Sigmoid colon (tissue), 7 donors: ENCODE measurements at regions of chr9 and their contacts with region 1.

Region 1: DNA sequence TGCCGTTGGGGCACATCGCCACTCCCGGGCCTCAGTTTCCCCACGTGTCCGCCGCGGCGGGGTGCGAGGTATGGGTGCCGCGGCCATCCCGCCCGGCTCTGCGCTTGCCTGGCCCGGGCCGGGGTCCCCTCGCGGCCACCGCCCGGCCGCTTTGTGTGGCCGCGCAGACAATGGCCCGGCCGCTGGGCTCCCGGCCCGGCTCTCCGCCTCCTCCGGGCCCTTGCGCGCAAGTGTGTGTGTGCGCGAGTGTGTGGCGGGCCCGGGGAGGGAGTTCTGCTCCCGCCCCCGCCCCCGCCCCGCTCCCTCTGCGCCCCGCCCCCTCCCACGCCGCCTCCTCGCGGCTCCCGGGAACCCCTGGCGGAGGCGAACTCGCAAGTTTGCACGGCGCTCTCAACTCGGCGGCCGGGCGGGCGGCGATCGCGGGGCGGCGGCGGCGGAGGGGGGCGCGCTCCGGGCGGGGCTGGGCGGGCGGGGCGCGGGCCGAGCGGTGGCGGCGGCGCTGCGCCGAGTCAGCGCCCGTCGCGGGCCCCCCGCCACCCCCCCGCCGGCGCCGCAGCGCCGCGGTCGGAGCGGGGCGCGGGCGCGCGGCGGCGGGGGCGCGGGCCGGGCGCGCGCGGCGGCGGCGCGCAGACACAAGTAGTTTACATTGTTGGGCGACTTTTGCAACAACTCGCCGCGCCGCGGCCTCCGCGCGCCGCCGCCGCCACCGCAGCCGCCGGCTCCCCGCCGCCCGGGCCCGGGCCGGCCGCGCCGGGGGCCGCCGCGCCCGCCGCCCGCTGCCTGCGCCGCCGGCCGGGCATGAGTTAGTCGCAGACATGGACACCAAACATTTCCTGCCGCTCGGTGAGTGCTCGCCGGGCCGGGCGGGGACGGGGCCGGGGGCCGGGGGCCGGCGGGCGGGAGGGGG is at the start of gene RXRA:
- DNase-seq: peak; percentile 94
- H3K4me3 ChIP-seq: peak within 1 kb of the TSS; percentile 81 to 88 (median 84)
- H3K27ac ChIP-seq: peak within 1 kb of the TSS; percentile 96 to 100 (median 97)
- H3K4me1 ChIP-seq: peaks cover 0 to 63% (median 60%) of the 10 kb centered on the region in 4 donors
- H3K27me3 ChIP-seq: no peaks in the 10 kb centered on the region
- CTCF ChIP-seq: no peak
- EP300 ChIP-seq: no peak
- POLR2A ChIP-seq: no peak
- total RNA-seq, gene RXRA: 26.7 to 49.0 (median 31.4) TPM

Region 2: GRCh38 chr9:134253606-134254198 is 72.4 kb before region 1 on chr9:
- intact Hi-C with region 1: no loop called
- DNase-seq: no peak
- H3K4me3 ChIP-seq: no peak overlapping the region
- H3K27ac ChIP-seq: no peak overlapping the region
- H3K4me1 ChIP-seq: peaks cover 0 to 3% (median 0%) of the 10 kb centered on the region in 4 donors
- H3K27me3 ChIP-seq: no peaks in the 10 kb centered on the region
- CTCF ChIP-seq: no peak
- EP300 ChIP-seq: no peak
- POLR2A ChIP-seq: no peak

Region 3: DNA sequence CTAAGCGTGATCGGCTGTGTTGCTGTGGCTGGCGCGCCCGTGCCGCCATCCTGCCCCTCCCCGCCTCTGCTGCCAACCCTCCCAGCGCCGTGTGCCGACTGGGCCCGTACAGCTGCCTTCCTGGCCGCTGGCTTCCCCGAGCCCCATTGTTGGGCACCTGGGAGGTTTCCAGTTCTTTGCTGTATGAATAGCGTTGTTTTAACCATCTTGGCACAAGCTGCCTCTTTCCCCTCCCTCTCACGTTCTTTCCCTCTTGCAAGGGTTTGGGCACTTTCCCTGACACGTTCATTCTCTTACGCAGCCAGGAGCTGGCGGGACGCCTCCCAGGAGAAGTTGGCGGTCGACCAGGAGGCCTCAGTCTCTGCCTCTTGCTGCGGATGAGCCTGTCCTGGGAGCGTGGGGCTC is 43.0 kb before region 1 on chr9:
- intact Hi-C with region 1: loop called (anchors 2 kb)
- DNase-seq: peak; percentile 96
- H3K4me3 ChIP-seq: peak overlapping the region in 2 of 4 donors; percentile 12 to 25
- H3K27ac ChIP-seq: peak overlapping the region; percentile 42 to 73 (median 69)
- H3K4me1 ChIP-seq: peaks cover 0 to 18% (median 17%) of the 10 kb centered on the region in 4 donors
- H3K27me3 ChIP-seq: no peaks in the 10 kb centered on the region
- CTCF ChIP-seq: no peak
- EP300 ChIP-seq: peak in 1 of 4 donors; percentile 43
- POLR2A ChIP-seq: no peak

Region 4: DNA sequence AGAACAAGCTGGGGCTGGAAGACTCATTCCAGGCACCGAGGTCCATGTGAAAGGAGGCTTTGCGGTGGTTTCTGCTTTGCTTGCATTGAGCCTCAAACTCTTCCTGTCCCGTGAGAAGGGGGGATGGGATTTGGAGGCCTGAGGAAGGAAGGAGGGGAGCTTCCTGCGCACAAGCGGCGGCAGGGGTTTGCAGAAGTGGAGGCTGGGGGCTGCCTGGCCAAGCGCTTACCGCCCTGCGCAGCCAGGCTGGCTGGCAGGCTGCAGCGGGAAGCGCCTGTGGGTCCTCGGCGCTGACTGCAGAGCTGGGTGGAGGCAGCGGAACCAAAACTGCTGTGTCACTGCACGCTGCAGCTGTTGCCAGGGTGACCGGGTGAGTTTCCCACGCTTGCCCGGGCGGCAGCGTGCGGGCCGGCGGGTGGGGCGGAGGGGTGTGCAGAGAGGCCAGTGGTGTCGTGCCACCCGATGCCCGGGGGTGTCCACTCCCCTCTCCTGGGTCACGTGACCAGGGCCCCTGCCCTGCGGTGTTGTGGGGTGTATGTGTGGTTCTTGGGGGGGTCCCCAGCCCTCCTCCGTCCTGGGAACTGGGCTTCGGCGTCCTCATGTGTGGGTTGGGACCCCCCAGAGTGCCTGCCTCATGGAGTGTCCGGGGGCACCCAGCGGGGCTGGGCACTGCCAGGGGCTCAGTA is 81.2 kb after region 1 on chr9:
- intact Hi-C with region 1: loop called (anchors 5 kb)
- DNase-seq: peak; percentile 96
- H3K4me3 ChIP-seq: peak overlapping the region in 3 of 4 donors; percentile 26 to 32 (median 31)
- H3K27ac ChIP-seq: peak overlapping the region; percentile 54 to 78 (median 69)
- H3K4me1 ChIP-seq: peaks cover 0 to 99% (median 93%) of the 10 kb centered on the region in 4 donors
- H3K27me3 ChIP-seq: no peaks in the 10 kb centered on the region
- CTCF ChIP-seq: no peak
- EP300 ChIP-seq: peak in 1 of 4 donors; percentile 25
- POLR2A ChIP-seq: no peak

Region 5: GRCh38 chr9:134443168-134444037 is 117.3 kb after region 1 on chr9:
- intact Hi-C with region 1: loop called (anchors 2 kb)
- DNase-seq: peak; percentile 95
- H3K4me3 ChIP-seq: no peak overlapping the region
- H3K27ac ChIP-seq: peak overlapping the region in 2 of 4 donors; percentile 22 to 43
- H3K4me1 ChIP-seq: peaks cover 0 to 27% (median 25%) of the 10 kb centered on the region in 4 donors
- H3K27me3 ChIP-seq: peaks cover 3 to 20% (median 10%) of the 10 kb centered on the region in 3 donors
- CTCF ChIP-seq: peak; percentile 98 to 99 (median 99)
- EP300 ChIP-seq: no peak
- POLR2A ChIP-seq: no peak

Region 6: GRCh38 chr9:134738869-134739659 is 413.0 kb after region 1 on chr9:
- intact Hi-C with region 1: loop called (anchors 10 kb)
- DNase-seq: peak; percentile 91
- H3K4me3 ChIP-seq: no peak overlapping the region
- H3K27ac ChIP-seq: peak overlapping the region in 3 of 4 donors; percentile 26 to 93 (median 34)
- H3K4me1 ChIP-seq: peaks cover 0 to 43% (median 26%) of the 10 kb centered on the region in 4 donors
- H3K27me3 ChIP-seq: no peaks in the 10 kb centered on the region
- CTCF ChIP-seq: peak; percentile 90 to 98 (median 94)
- EP300 ChIP-seq: no peak
- POLR2A ChIP-seq: no peak